ENCODE measurements at regions of chr7 and their contacts with region 1.

Region 1: GRCh38 chr7:116499168-116500077 is at the start of gene CAV2:
- DNase-seq: peak; percentile 88 to 96 (median 93)
- ATAC-seq: peak; percentile 85
- H3K4me3 ChIP-seq: peak within 1 kb of the TSS; percentile 53
- H3K27ac ChIP-seq: peak within 1 kb of the TSS; percentile 73
- H3K4me1 ChIP-seq: peaks cover 25 to 38% of the 10 kb centered on the region in 2 experiments
- H3K27me3 ChIP-seq: no peaks in the 10 kb centered on the region
- CTCF ChIP-seq: no peak
- EP300 ChIP-seq: no peak
- POLR2A ChIP-seq: peak; percentile 69
- RAD21 ChIP-seq: no peak
- polyA plus RNA-seq, gene CAV2: 16.1 to 16.5 TPM

Region 2: DNA sequence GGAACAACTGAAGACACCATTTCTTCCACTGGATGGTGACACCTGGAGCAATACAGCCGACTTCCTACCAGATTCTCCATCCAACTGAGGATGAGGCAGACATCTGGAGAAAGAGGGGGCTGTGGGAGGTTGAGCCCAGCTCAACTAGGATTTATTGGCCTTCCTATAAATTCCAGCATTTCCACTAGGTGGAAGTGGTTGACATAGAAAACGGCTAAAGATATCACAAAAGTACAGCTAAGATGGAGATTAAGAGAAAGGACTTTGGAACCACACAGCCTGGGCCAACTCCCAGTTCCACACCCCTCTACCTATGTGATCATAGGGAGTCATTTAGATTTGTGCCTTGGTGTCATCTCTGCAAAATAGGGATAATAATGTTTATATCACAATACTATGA is 61.2 kb before region 1 on chr7:
- CTCF ChIA-PET with region 1: no interaction called
- POLR2A ChIA-PET with region 1: no interaction called
- in situ Hi-C with region 1: no loop called
- intact Hi-C with region 1: loop called (anchors 2 kb)
- DNase-seq: peak in 2 of 4 experiments; percentile 20 to 49
- ATAC-seq: peak; percentile 79
- H3K4me3 ChIP-seq: no peak overlapping the region
- H3K27ac ChIP-seq: no peak overlapping the region
- H3K4me1 ChIP-seq: peaks cover 8 to 25% of the 10 kb centered on the region in 2 experiments; a peak in 3 of 5 replicates
- H3K27me3 ChIP-seq: no peaks in the 10 kb centered on the region; a peak in 1 of 5 replicates
- CTCF ChIP-seq: peak; percentile 32 to 71 (median 50); a peak in 4 of 6 replicates
- EP300 ChIP-seq: no peak
- POLR2A ChIP-seq: no peak
- RAD21 ChIP-seq: peak; percentile 70 to 80

Region 3: DNA sequence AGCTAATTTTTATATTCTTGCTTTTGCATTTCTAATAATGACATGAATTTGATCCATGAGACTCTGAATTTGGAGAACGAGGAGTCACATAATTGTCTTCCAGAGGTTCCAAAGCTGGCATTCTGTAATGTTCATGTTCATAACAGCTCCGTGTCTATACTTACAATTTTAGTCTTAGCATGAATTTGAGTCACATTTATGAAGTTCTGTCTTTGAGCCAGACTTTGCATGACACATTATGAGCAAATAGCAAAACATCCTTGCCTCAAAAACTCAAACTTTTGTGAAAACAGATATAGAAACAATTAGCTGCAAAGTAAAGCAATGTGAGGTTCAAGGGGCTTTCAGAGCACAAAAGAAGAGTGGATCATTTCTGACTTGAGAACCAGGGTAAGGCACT is 44.4 kb before region 1 on chr7:
- CTCF ChIA-PET with region 1: no interaction called
- POLR2A ChIA-PET with region 1: no interaction called
- in situ Hi-C with region 1: no loop called
- intact Hi-C with region 1: no loop called
- DNase-seq: no peak
- ATAC-seq: no peak
- H3K4me3 ChIP-seq: no peak overlapping the region
- H3K27ac ChIP-seq: no peak overlapping the region
- H3K4me1 ChIP-seq: no peaks in the 10 kb centered on the region
- H3K27me3 ChIP-seq: no peaks in the 10 kb centered on the region
- CTCF ChIP-seq: no peak
- EP300 ChIP-seq: no peak
- POLR2A ChIP-seq: no peak
- RAD21 ChIP-seq: no peak

Region 4: GRCh38 chr7:116465125-116465524 is 34.3 kb before region 1 on chr7:
- CTCF ChIA-PET with region 1: no interaction called
- POLR2A ChIA-PET with region 1: no interaction called
- in situ Hi-C with region 1: no loop called
- intact Hi-C with region 1: loop called (anchors 5 kb)
- DNase-seq: peak; percentile 36 to 65 (median 52)
- ATAC-seq: peak; percentile 79
- H3K4me3 ChIP-seq: no peak overlapping the region
- H3K27ac ChIP-seq: peak overlapping the region; percentile 86
- H3K4me1 ChIP-seq: peaks cover 6 to 24% of the 10 kb centered on the region in 2 experiments; a peak in 3 of 5 replicates
- H3K27me3 ChIP-seq: no peaks in the 10 kb centered on the region
- CTCF ChIP-seq: no peak
- EP300 ChIP-seq: no peak
- POLR2A ChIP-seq: no peak
- RAD21 ChIP-seq: no peak

Region 5: GRCh38 chr7:116511552-116512519 is 12.4 kb after region 1 on chr7:
- CTCF ChIA-PET with region 1: no interaction called
- POLR2A ChIA-PET with region 1: interaction called, 10 read pairs
- in situ Hi-C with region 1: no loop called
- intact Hi-C with region 1: no loop called
- DNase-seq: peak in 2 of 4 experiments; percentile 34 to 44
- ATAC-seq: peak; percentile 73
- H3K4me3 ChIP-seq: peak overlapping the region; percentile 18
- H3K27ac ChIP-seq: peak overlapping the region; percentile 23
- H3K4me1 ChIP-seq: peaks cover 0 to 19% of the 10 kb centered on the region in 2 experiments; a peak in 3 of 5 replicates
- H3K27me3 ChIP-seq: no peaks in the 10 kb centered on the region
- CTCF ChIP-seq: no peak
- EP300 ChIP-seq: peak; percentile 33; the same call in 1 of the 2 replicates
- POLR2A ChIP-seq: peak; percentile 39
- RAD21 ChIP-seq: peak in 1 of 2 experiments; percentile 15; a peak in 1 of 4 replicates

Region 6: DNA sequence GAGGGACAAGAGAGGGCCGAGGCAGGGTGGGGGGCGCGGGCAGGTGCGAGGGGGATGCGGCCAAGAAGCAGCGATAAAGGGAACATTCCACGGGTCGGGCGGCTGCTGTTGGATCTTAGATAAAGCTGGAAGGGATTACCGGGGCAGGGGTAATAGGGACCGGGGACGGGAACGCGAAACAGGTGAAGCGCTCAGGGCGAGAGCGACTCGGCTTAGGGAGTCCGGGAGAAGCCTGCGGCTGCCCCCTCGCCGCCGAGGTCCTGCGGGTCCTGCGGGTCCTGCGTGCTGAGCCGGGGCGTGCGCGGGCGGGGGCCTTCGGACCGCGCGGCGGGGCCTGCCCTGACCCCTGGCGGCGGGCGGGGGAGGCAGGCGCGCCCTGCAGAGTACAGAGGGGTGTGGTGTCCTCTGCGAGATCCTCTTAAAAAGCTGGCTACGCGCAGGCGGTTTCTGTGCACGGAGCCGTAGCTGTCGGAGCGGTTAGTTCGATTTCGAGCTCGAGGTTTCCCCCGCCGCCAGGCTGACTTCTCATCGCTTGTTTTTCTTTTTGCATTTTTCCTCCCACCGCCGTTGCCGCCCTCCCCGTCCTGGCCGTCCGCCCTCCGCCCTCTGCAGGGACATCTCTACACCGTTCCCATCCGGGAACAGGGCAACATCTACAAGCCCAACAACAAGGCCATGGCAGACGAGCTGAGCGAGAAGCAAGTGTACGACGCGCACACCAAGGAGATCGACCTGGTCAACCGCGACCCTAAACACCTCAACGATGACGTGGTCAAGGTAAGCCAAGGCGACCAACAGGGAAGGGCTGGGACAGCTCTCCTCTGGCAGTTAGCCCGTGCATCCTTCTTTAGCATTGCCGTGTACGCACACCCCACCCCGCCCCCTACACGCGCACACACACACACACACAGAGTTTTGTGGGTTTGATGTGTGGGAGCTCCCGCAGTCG is 26.8 kb after region 1 on chr7:
- CTCF ChIA-PET with region 1: no interaction called
- POLR2A ChIA-PET with region 1: interaction called, 11 read pairs
- in situ Hi-C with region 1: no loop called
- intact Hi-C with region 1: loop called (anchors 2 kb)
- DNase-seq: peak; percentile 88 to 94 (median 94)
- ATAC-seq: peak; percentile 97
- H3K4me3 ChIP-seq: peak overlapping the region; percentile 50
- H3K27ac ChIP-seq: no peak overlapping the region
- H3K4me1 ChIP-seq: peaks cover 21 to 24% of the 10 kb centered on the region in 2 experiments
- H3K27me3 ChIP-seq: peaks cover 0 to 7% of the 10 kb centered on the region in 2 experiments; a peak in 2 of 5 replicates
- CTCF ChIP-seq: peak; percentile 77 to 91 (median 80)
- EP300 ChIP-seq: no peak
- POLR2A ChIP-seq: no peak
- RAD21 ChIP-seq: peak; percentile 96 to 98

Region 7: GRCh38 chr7:118389629-118390028 is 1890.2 kb after region 1 on chr7:
- CTCF ChIA-PET with region 1: no interaction called
- POLR2A ChIA-PET with region 1: no interaction called
- in situ Hi-C with region 1: loop called (anchors 10 kb)
- intact Hi-C with region 1: no loop called
- DNase-seq: no peak
- ATAC-seq: no peak
- H3K4me3 ChIP-seq: no peak overlapping the region
- H3K27ac ChIP-seq: no peak overlapping the region
- H3K4me1 ChIP-seq: no peaks in the 10 kb centered on the region
- H3K27me3 ChIP-seq: no peaks in the 10 kb centered on the region
- CTCF ChIP-seq: no peak
- EP300 ChIP-seq: no peak
- POLR2A ChIP-seq: no peak
- RAD21 ChIP-seq: no peak